HepG2 (cell line): ENCODE measurements at regions of chr11 and their contacts with region 1.

Region 1: DNA sequence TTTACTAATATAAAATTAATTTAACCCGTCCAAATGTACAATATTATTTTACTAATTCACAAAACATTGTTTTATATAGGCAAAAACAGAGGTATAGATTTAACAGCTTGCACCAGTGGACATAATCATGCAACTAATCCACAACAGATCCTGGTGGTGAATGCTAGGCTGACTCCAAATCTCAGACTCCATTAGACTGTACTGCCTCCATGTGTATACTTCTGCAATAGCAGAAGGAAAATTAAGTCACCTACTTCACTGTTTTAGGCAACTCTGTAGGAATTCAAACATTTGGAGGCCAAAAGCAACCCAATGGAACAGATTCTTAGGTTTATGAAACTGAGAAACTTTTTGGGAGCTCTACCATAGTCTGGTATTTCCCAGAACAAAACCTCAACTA is 30.0 kb upstream of the RAB39A start:
- DNase-seq: peak; percentile 20
- ATAC-seq: peak; percentile 80
- H3K4me3 ChIP-seq: no peak overlapping the region
- H3K27ac ChIP-seq: no peak overlapping the region
- H3K4me1 ChIP-seq: no peaks in the 10 kb centered on the region
- H3K27me3 ChIP-seq: peaks cover 0 to 8% of the 10 kb centered on the region in 2 experiments; a peak in 1 of 5 replicates
- CTCF ChIP-seq: peak; percentile 44
- EP300 ChIP-seq: no peak
- POLR2A ChIP-seq: no peak
- RAD21 ChIP-seq: no peak

Region 2: GRCh38 chr11:107741044-107741823 is 157.0 kb before region 1 on chr11:
- CTCF ChIA-PET with region 1: no interaction called
- POLR2A ChIA-PET with region 1: no interaction called
- in situ Hi-C with region 1: no loop called
- intact Hi-C with region 1: loop called (anchors 1 kb)
- DNase-seq: peak; percentile 21
- ATAC-seq: peak; percentile 85
- H3K4me3 ChIP-seq: no peak overlapping the region
- H3K27ac ChIP-seq: no peak overlapping the region
- H3K4me1 ChIP-seq: no peaks in the 10 kb centered on the region
- H3K27me3 ChIP-seq: no peaks in the 10 kb centered on the region
- CTCF ChIP-seq: peak; percentile 69
- EP300 ChIP-seq: no peak
- POLR2A ChIP-seq: no peak
- RAD21 ChIP-seq: no peak

Region 3: GRCh38 chr11:107824668-107825369 is 73.5 kb before region 1 on chr11:
- CTCF ChIA-PET with region 1: no interaction called
- POLR2A ChIA-PET with region 1: no interaction called
- in situ Hi-C with region 1: no loop called
- intact Hi-C with region 1: loop called (anchors 2 kb)
- DNase-seq: no peak
- ATAC-seq: no peak
- H3K4me3 ChIP-seq: no peak overlapping the region
- H3K27ac ChIP-seq: no peak overlapping the region
- H3K4me1 ChIP-seq: no peaks in the 10 kb centered on the region
- H3K27me3 ChIP-seq: no peaks in the 10 kb centered on the region
- CTCF ChIP-seq: no peak
- EP300 ChIP-seq: no peak
- POLR2A ChIP-seq: no peak
- RAD21 ChIP-seq: no peak

Region 4: GRCh38 chr11:107928046-107928766 is 29.9 kb after region 1 on chr11 and contains the start of gene RAB39A:
- CTCF ChIA-PET with region 1: no interaction called
- POLR2A ChIA-PET with region 1: no interaction called
- in situ Hi-C with region 1: no loop called
- intact Hi-C with region 1: no loop called
- DNase-seq: peak; percentile 21
- ATAC-seq: peak; percentile 94
- H3K4me3 ChIP-seq: no peak within 1 kb of the TSS
- H3K27ac ChIP-seq: no peak within 1 kb of the TSS
- H3K4me1 ChIP-seq: no peaks in the 10 kb centered on the region
- H3K27me3 ChIP-seq: peaks cover 0 to 14% of the 10 kb centered on the region in 2 experiments; a peak in 2 of 5 replicates
- CTCF ChIP-seq: no peak
- EP300 ChIP-seq: no peak
- POLR2A ChIP-seq: no peak
- RAD21 ChIP-seq: no peak
- total RNA-seq, gene RAB39A: not detected in 2 replicates

Region 5: DNA sequence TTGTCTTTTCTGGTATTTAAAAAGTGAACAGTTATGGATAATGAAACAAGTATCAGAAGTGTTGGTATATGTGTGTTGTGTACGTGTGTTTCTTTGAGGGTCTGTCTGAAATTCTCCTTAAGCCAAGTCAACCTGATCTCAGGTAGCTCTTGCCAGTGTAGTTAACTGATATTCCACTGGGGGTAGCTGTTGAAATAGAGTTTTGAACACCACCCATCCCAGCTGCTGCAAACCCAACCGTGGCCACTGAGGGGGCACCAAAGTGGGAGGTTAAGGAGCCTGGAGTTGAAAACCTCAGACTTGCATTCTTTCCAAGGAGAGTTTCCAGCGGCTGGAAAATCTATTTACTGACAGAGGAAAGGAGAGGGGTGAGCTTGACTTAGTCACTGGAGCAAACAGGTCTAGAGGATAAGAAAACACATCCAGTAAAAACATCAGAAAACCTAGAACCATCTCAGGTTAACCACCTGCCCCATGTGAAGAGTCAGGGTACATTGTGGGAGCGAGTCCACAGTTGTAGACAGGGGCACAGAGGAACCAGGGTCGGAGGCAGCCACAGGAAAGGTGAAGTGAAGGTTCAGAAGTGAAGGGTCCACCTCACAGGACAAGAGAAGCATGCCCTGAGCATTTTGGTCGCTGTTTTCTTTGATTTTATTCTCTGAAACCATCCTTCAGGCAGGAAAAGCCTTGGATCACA is 101.6 kb after region 1 on chr11:
- CTCF ChIA-PET with region 1: no interaction called
- POLR2A ChIA-PET with region 1: no interaction called
- in situ Hi-C with region 1: loop called (anchors 25 kb)
- intact Hi-C with region 1: no loop called
- DNase-seq: peak; percentile 72
- ATAC-seq: peak; percentile 100
- H3K4me3 ChIP-seq: no peak overlapping the region
- H3K27ac ChIP-seq: no peak overlapping the region
- H3K4me1 ChIP-seq: no peaks in the 10 kb centered on the region
- H3K27me3 ChIP-seq: peaks cover 0 to 3% of the 10 kb centered on the region in 2 experiments; a peak in 1 of 5 replicates
- CTCF ChIP-seq: peak; percentile 78
- EP300 ChIP-seq: no peak
- POLR2A ChIP-seq: no peak
- RAD21 ChIP-seq: peak; percentile 33; the same call in 1 of the 2 replicates